ENCODE measurements at regions of chr3 and their contacts with region 1.

Region 1: DNA sequence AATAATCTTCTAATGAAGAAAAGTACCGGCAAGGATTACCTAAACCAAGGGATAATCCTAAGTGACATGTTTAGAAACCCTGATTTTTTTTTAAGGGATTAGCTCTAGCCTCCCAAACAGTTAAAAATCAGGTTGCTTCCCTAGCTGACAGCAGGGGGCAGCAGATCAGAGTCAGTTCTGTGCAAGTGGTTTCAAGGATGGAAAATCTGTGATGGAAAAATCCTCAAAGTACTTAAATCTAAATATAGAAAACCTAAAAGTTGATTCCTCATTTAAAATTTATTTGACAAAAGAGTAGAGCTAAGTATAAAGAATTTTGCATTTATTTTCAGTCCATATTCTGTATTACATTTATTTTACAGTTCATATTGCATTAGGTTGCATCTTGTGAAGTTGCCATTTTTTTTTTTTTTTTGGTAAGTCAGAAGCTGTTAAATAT is 107.6 kb downstream of the PEX5L start:
- DNase-seq: peak; percentile 16 to 52
- ATAC-seq: no peak
- H3K4me3 ChIP-seq: no peak overlapping the region
- H3K27ac ChIP-seq: no peak overlapping the region
- H3K4me1 ChIP-seq: no peaks in the 10 kb centered on the region
- H3K27me3 ChIP-seq: peaks cover 0 to 3% (median 0%) of the 10 kb centered on the region in 3 donors
- CTCF ChIP-seq: peak; percentile 68

Region 2: GRCh38 chr3:179865861-179866505 is 63.1 kb before region 1 on chr3:
- intact Hi-C with region 1: no loop called
- DNase-seq: no peak
- ATAC-seq: no peak
- H3K4me3 ChIP-seq: no peak overlapping the region
- H3K27ac ChIP-seq: no peak overlapping the region
- H3K4me1 ChIP-seq: no peaks in the 10 kb centered on the region
- H3K27me3 ChIP-seq: no peaks in the 10 kb centered on the region
- CTCF ChIP-seq: no peak

Region 3: GRCh38 chr3:180594631-180595558 is 665.8 kb after region 1 on chr3:
- intact Hi-C with region 1: loop called in 1 of 2 experiments (anchors 2 kb)
- DNase-seq: no peak
- ATAC-seq: no peak
- H3K4me3 ChIP-seq: no peak overlapping the region
- H3K27ac ChIP-seq: no peak overlapping the region
- H3K4me1 ChIP-seq: no peaks in the 10 kb centered on the region
- H3K27me3 ChIP-seq: peaks cover 0 to 4% (median 2%) of the 10 kb centered on the region in 3 donors
- CTCF ChIP-seq: no peak

Measured in psoas muscle (tissue), 8 donors.